Ovary (tissue), 10 donors: ENCODE measurements at regions of chr14 and their contacts with region 1.

Region 1: DNA sequence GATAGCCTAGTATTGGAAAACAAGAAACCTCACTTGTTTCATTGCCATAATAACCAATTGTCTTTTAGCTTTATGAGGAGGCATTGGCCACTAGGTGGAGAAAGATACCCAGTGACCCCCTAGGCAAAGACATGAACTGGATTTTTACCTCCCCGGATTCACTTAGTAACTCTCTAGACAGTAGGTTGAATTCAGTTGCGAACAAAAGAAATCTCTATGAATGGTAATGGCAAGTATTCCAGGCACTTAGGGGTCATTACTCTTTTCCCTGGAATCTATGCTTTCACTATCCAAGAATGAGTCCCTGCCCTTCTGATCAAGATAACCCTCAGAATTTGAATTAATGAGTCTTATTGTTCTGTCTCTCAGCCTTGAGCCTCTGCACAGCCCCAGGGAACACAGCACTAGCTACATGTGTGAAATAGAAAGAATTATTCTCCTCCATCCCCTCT is 29.5 kb upstream of the RHOJ start:
- DNase-seq: peak in 1 of 5 donors; percentile 47
- H3K4me3 ChIP-seq: no peak overlapping the region
- H3K27ac ChIP-seq: no peak overlapping the region
- H3K4me1 ChIP-seq: no peaks in the 10 kb centered on the region
- H3K27me3 ChIP-seq: no peaks in the 10 kb centered on the region
- CTCF ChIP-seq: peak; percentile 42 to 62 (median 44)
- EP300 ChIP-seq: no peak
- POLR2A ChIP-seq: no peak

Region 2: GRCh38 chr14:61300209-61300608 is 1874.6 kb before region 1 on chr14:
- intact Hi-C with region 1: loop called in 1 of 4 experiments (anchors 5 kb)
- DNase-seq: no peak
- H3K4me3 ChIP-seq: no peak overlapping the region
- H3K27ac ChIP-seq: no peak overlapping the region
- H3K4me1 ChIP-seq: peaks cover 2% of the 10 kb centered on the region
- H3K27me3 ChIP-seq: no peaks in the 10 kb centered on the region
- CTCF ChIP-seq: no peak
- EP300 ChIP-seq: no peak
- POLR2A ChIP-seq: no peak

Region 3: DNA sequence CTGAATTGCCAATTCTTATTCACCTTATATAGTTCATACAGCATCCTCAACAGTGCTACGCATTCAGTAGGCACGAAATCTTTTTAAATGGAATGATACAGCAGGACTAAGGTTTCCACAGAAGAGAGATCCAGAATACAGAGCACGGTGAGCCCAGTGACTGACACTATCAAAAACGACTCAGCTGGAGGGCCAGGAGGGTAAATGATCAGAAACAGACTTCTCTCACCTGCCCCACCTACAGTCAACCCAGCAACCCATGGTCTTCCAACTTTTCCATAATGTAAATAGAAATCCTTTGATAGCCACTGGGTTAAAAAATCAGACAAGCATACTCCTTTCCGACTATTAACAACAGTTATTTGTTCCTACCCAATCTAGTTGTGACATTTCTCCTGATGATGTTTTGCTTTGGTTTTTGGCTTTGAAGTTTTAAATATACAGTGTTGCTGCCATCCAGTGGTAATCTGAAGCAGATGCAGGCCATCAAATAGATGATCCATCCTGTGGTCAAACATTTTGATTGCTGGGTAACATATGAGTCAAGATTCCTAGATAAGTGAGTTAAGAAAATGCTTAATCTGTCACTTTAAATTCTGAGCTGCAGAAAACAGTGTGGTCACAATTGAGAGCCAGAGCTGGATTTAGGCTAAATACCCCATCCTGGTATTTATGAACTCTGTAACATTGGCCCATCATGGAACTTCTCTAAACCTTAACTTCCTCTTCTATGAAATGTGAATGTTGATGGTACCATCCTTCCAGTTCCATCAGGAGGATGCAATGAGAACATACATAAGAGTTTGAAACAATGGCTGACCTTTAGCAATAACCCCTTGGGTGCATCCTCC is 101.9 kb after region 1 on chr14:
- intact Hi-C with region 1: loop called in 3 of 4 experiments (anchors 1 to 10 kb)
- DNase-seq: no peak
- H3K4me3 ChIP-seq: no peak overlapping the region
- H3K27ac ChIP-seq: no peak overlapping the region
- H3K4me1 ChIP-seq: peaks cover 9% of the 10 kb centered on the region
- H3K27me3 ChIP-seq: no peaks in the 10 kb centered on the region
- CTCF ChIP-seq: peak; percentile 37 to 81 (median 80)
- EP300 ChIP-seq: no peak
- POLR2A ChIP-seq: no peak